GM12878 (cell line): ENCODE measurements at regions of chr9 and their contacts with region 1.

Region 1: DNA sequence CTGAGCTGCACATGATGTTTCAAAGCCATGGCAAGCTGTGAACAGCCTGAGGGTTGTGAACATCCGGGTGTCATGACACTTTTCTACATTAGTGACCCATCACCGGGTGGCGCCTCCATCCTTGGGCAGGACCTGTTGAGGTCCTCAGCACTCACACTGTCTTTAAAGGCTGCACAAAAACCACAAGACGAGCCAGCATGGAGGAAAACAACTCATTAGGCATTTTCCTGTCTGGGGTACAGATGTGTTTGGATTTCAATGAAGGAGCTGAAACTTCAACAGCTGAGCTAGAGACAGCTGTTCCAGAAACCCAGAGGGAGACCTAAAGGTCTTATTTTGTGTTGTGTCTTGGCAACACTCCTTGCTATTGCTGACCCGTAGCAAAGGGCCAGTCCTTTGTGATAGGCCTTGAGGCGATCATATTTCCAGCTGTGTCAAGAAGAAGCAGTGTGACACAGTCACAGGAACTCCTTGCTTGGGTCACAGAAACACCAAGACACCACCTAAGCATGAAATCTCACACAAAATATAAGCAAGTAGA is 151.8 kb upstream of the VLDLR start:
- DNase-seq: peak; percentile 7
- ATAC-seq: peak; percentile 44
- H3K4me3 ChIP-seq: no peak overlapping the region
- H3K27ac ChIP-seq: no peak overlapping the region
- H3K4me1 ChIP-seq: peaks cover 6% of the 10 kb centered on the region; the same call in 1 of the 2 replicates
- H3K27me3 ChIP-seq: no peaks in the 10 kb centered on the region
- CTCF ChIP-seq: peak in 2 of 3 experiments; percentile 17 to 36; a peak in 3 of 6 replicates
- EP300 ChIP-seq: no peak
- POLR2A ChIP-seq: no peak
- RAD21 ChIP-seq: peak; percentile 59; the same call in 1 of the 2 replicates

Region 2: DNA sequence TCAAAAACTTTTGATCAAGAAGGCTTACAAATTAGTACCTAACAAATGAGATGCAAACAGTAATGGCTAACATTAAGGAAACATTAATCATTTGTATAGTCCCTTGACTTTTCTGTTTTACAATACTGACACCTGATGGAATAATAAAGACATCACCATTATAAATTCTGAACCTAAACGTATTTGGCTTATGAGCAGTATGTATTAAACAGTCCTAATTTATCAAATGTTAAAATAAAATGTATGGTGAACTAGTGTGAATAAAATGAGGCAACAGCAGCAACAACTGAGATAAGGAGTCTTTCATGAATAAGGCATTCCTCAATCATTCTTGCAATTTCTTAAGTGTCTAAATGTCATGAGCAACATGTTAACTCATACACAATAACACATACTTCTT is 368.2 kb after region 1 on chr9:
- CTCF ChIA-PET with region 1: interaction called, 4 read pairs
- POLR2A ChIA-PET with region 1: no interaction called
- RAD21 ChIA-PET with region 1: interaction called, 10 read pairs
- SMC1A ChIA-PET with region 1: no interaction called
- in situ Hi-C with region 1: no loop called
- intact Hi-C with region 1: loop called (anchors 5 kb)
- DNase-seq: no peak
- ATAC-seq: peak; percentile 43
- H3K4me3 ChIP-seq: no peak overlapping the region
- H3K27ac ChIP-seq: no peak overlapping the region
- H3K4me1 ChIP-seq: peaks cover 5% of the 10 kb centered on the region
- H3K27me3 ChIP-seq: no peaks in the 10 kb centered on the region
- CTCF ChIP-seq: no peak; a peak in 1 of 6 replicates
- EP300 ChIP-seq: no peak
- POLR2A ChIP-seq: no peak
- RAD21 ChIP-seq: peak; percentile 18; the same call in 1 of the 2 replicates

Region 3: GRCh38 chr9:3385871-3386270 is 916.1 kb after region 1 on chr9:
- CTCF ChIA-PET with region 1: no interaction called
- POLR2A ChIA-PET with region 1: no interaction called
- RAD21 ChIA-PET with region 1: no interaction called
- SMC1A ChIA-PET with region 1: no interaction called
- in situ Hi-C with region 1: no loop called
- intact Hi-C with region 1: no loop called
- DNase-seq: peak; percentile 63
- ATAC-seq: peak; percentile 98
- H3K4me3 ChIP-seq: no peak overlapping the region
- H3K27ac ChIP-seq: no peak overlapping the region
- H3K4me1 ChIP-seq: peaks cover 4% of the 10 kb centered on the region
- H3K27me3 ChIP-seq: no peaks in the 10 kb centered on the region
- CTCF ChIP-seq: no peak
- EP300 ChIP-seq: 0 out of 4 replicates have a peak, but pooled peaks of 1 of the 2 experiments have one; percentile 10
- POLR2A ChIP-seq: no peak
- RAD21 ChIP-seq: no peak